Activated B cell treated with CpG ODN at 0.5 μM for 24 hours (primary cell): ENCODE measurements at regions of chr20 and their contacts with region 1.

Region 1: GRCh38 chr20:53660078-53660909 is 66.7 kb upstream of the ZNF217 start:
- DNase-seq: no peak
- ATAC-seq: peak; percentile 31
- H3K4me3 Mint-ChIP-seq: peak overlapping the region; percentile 87
- H3K27ac Mint-ChIP-seq: peak overlapping the region; percentile 90
- H3K4me1 Mint-ChIP-seq: peaks cover 66% of the 10 kb centered on the region
- H3K27me3 Mint-ChIP-seq: no peaks in the 10 kb centered on the region
- CTCF ChIP-seq: no peak

Region 2: DNA sequence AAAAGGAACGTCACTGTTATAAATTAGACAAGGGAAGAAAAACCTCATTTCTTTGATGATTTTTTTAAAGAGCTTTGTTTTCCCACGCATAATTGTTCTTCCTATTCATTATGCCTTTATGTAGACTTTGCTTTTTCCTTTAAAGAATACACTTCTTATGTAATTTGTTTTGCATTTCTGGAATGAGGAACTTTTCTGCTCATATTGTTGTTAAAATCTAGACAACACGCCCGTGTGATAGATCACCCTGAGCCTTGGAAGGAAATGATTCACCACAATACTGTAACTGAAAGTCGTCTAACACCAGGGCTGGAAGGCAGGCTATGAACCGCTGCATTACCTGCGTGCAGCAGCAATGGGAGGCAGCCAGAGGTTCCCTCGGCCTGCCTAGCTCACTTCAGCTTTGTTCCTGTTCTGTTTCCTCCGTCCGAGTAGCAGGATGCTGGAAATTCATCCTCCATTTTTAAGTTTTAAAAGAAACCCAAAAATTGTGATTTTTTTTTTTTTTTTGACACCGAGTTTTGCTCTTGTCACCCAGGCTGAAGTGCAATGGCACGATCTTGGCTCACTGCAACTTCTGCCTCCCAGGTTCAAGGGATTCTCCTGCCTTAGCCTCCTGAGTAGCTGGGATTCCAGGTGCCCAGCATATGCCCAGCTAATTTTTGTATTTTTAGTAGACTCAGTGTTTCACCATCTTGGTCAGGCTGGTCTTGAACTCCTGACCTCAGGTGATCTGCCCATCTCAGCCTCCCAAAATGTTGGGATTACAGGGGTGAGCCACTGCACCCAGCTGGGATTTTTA is 17.1 kb before region 1 on chr20:
- CTCF ChIA-PET with region 1: no interaction called
- POLR2A ChIA-PET with region 1: interaction called, 6 read pairs
- intact Hi-C with region 1: loop called (anchors 2 kb)
- DNase-seq: no peak
- ATAC-seq: peak; percentile 94
- H3K4me3 Mint-ChIP-seq: peak overlapping the region; percentile 78
- H3K27ac Mint-ChIP-seq: peak overlapping the region; percentile 94
- H3K4me1 Mint-ChIP-seq: peaks cover 36% of the 10 kb centered on the region
- H3K27me3 Mint-ChIP-seq: no peaks in the 10 kb centered on the region
- CTCF ChIP-seq: no peak

Region 3: GRCh38 chr20:53738039-53738944 is 78.0 kb after region 1 on chr20:
- CTCF ChIA-PET with region 1: no interaction called
- POLR2A ChIA-PET with region 1: interaction called, 6 read pairs
- intact Hi-C with region 1: loop called (anchors 2 kb)
- DNase-seq: no peak
- ATAC-seq: no peak
- H3K4me3 Mint-ChIP-seq: peak overlapping the region; percentile 74
- H3K27ac Mint-ChIP-seq: peak overlapping the region; percentile 97
- H3K4me1 Mint-ChIP-seq: peaks cover 78% of the 10 kb centered on the region
- H3K27me3 Mint-ChIP-seq: no peaks in the 10 kb centered on the region
- CTCF ChIP-seq: no peak